ENCODE measurements at regions of chr6 and their contacts with region 1.

Region 1: DNA sequence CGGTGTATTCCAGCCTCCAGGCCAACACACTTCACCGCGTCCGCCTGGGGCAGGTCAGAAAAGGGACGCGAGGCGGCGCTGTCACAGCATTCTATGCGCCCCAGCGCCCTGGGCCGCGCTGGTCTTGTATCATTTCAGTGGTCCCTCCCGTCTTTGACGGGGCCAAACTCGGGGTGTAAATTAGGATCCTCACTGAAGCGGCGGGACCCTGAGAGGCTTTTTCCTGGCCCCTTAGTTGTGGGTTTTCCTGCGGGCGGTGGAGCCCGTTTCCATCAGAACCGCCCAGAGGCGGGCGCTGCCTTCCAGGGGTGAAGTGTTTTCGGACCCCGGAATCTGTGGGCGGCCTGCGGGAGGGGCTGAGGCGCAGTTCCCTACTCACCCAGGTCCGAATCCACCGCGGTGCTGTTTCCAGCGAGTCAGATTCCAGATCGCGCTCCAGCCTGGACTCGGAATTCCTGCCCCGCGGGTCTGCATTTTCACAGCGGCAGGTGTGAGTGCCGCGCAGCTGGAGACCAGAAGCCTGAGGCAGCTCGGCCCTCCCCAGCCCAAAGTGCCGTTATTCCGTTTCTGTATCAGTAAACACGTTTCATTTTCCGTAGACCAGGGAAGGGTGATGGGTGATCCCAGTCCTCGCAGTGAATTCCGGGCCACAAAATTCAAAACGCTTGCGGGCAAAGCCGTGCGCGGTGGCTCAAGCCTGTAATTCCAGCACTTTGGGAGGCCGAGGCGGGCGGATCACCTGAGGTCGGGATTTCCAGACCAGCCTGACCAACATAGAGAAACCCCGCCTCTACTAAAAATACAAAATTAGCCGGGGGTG is 3.9 kb upstream of the MICB start:
- DNase-seq: peak; percentile 66
- ATAC-seq: peak; percentile 69
- H3K4me3 ChIP-seq: peak overlapping the region; percentile 74 to 88
- H3K27ac ChIP-seq: peak overlapping the region; percentile 76
- H3K4me1 ChIP-seq: peaks cover 23 to 45% of the 10 kb centered on the region in 2 experiments
- H3K27me3 ChIP-seq: no peaks in the 10 kb centered on the region
- CTCF ChIP-seq: peak; percentile 82 to 90 (median 88)
- POLR2A ChIP-seq: no peak
- RAD21 ChIP-seq: peak; percentile 85

Region 2: GRCh38 chr6:31403283-31403989 is 90.6 kb before region 1 on chr6 and contains the start of gene MICA:
- CTCF ChIA-PET with region 1: no interaction called
- POLR2A ChIA-PET with region 1: interaction called, 5 read pairs
- RAD21 ChIA-PET with region 1: no interaction called
- intact Hi-C with region 1: loop called (anchors 5 kb)
- DNase-seq: peak; percentile 79
- ATAC-seq: peak; percentile 81
- H3K4me3 ChIP-seq: peak within 1 kb of the TSS; percentile 57 to 94
- H3K27ac ChIP-seq: peak within 1 kb of the TSS; percentile 93
- H3K4me1 ChIP-seq: peaks cover 26 to 50% of the 10 kb centered on the region in 2 experiments
- H3K27me3 ChIP-seq: no peaks in the 10 kb centered on the region
- CTCF ChIP-seq: no peak
- POLR2A ChIP-seq: peak; percentile 26
- RAD21 ChIP-seq: no peak
- total RNA-seq, gene MICA: 24.1 TPM

Region 3: DNA sequence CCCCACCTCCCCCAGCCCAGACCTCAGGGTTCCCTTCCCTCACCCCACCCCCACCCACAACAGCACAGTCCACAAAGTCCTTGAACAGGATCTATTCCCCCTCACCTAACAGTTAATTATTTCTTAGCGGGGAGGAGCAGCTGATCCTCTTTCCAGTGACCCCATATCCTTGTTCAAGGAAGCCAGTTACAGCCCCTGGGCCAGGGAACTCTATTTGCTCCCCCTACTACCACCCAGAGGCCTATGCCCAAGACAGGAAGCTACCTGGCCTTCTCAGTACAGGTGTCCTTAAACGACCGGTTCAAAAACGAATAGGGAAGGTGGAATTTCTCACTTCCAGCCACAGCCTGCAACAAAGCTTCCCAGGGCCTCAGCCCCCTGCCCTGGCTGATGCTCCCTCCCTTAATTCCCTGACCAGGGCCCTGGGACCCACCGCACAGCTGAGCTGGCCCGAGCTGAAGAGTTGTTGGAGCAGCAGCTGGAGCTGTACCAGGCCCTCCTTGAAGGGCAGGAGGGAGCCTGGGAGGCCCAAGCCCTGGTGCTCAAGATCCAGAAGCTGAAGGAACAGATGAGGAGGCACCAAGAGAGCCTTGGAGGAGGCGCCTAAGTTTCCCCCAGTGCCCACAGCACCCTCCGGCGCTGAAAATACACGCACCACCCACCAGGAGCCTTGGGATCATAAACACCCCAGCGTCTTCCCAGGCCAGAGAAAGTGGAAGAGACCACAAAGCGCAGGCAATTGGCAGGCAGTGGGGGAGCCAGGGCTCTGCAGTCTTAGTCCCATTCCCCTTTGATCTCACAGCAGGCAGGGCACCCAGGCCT is 35.5 kb after region 1 on chr6:
- CTCF ChIA-PET with region 1: no interaction called
- POLR2A ChIA-PET with region 1: interaction called, 10 read pairs
- RAD21 ChIA-PET with region 1: no interaction called
- intact Hi-C with region 1: no loop called
- DNase-seq: no peak
- ATAC-seq: peak; percentile 43
- H3K4me3 ChIP-seq: no peak overlapping the region
- H3K27ac ChIP-seq: no peak overlapping the region
- H3K4me1 ChIP-seq: no peaks in the 10 kb centered on the region; a peak in 1 of 4 replicates
- H3K27me3 ChIP-seq: no peaks in the 10 kb centered on the region
- CTCF ChIP-seq: no peak
- POLR2A ChIP-seq: no peak
- RAD21 ChIP-seq: no peak

Region 4: DNA sequence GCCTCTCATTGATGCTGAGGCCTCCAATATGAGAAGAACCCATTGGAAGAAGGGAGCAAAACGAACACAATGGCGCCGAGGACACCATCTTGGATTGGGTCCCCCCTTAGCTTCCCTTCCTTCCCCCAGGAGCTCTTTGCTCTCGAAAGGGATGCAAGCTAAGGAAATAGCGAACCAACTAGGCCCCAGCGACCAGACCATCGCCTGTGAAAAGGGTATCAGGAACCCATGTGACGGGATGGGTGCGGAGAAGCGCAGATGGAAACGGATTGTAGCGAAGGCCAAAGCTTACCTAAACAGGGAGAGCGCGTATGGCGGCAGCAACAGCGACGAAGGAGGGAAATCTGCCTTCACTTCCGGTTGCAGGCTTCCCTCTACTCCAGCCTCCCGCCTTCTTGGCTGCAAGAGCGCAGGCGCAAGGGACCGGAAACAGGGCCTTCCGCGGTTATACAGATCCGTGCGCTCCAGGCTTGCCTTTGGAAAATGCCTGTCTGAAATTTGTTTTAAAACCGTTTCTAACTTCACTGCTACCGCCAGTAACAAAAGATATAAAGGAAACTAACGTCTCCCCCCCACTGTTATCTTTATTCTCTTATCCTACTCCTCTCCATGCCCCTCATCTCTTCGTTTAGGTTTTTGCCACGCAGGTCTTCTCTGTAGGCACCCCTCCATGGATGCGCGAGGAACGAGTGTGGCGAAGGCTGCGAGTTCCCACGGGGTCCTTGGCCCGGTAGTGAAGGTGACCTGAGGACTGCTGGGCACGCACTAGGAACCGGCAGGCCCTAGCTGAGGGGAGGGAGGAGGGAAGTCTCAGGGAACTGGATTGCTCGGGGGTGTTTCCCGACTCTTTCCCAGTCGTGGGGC is 47.8 kb after region 1 on chr6 and contains the start of gene DDX39B:
- CTCF ChIA-PET with region 1: interaction called, 6 read pairs
- POLR2A ChIA-PET with region 1: interaction called, 10 read pairs
- RAD21 ChIA-PET with region 1: no interaction called
- intact Hi-C with region 1: loop called (anchors 2 kb)
- DNase-seq: peak; percentile 95
- ATAC-seq: peak; percentile 74
- H3K4me3 ChIP-seq: peak within 1 kb of the TSS; percentile 85 to 98
- H3K27ac ChIP-seq: peak within 1 kb of the TSS; percentile 96
- H3K4me1 ChIP-seq: peaks cover 17 to 36% of the 10 kb centered on the region in 2 experiments
- H3K27me3 ChIP-seq: no peaks in the 10 kb centered on the region
- CTCF ChIP-seq: no peak
- POLR2A ChIP-seq: peak; percentile 79
- RAD21 ChIP-seq: no peak
- total RNA-seq, gene DDX39B: 545 TPM

Region 5: GRCh38 chr6:31546962-31547726 is 53.1 kb after region 1 on chr6 and contains the start of gene NFKBIL1:
- CTCF ChIA-PET with region 1: interaction called, 6 read pairs
- POLR2A ChIA-PET with region 1: interaction called, 10 read pairs
- RAD21 ChIA-PET with region 1: no interaction called
- intact Hi-C with region 1: loop called (anchors 2 kb)
- DNase-seq: peak; percentile 97
- ATAC-seq: peak; percentile 78
- H3K4me3 ChIP-seq: peak within 1 kb of the TSS; percentile 51 to 67
- H3K27ac ChIP-seq: peak within 1 kb of the TSS; percentile 50
- H3K4me1 ChIP-seq: peaks cover 19 to 30% of the 10 kb centered on the region in 2 experiments
- H3K27me3 ChIP-seq: no peaks in the 10 kb centered on the region
- CTCF ChIP-seq: no peak
- POLR2A ChIP-seq: peak; percentile 37
- RAD21 ChIP-seq: no peak
- total RNA-seq, gene NFKBIL1: 26.6 TPM